Activated CD4-positive, alpha-beta memory T cell treated with anti-CD3 and anti-CD28 coated beads, Interleukin-2, amount 10 ng/mL, durations not matched to agents 7 days and 5 days (primary cell): ENCODE measurements at regions of chr3 and their contacts with region 1.

Region 1: DNA sequence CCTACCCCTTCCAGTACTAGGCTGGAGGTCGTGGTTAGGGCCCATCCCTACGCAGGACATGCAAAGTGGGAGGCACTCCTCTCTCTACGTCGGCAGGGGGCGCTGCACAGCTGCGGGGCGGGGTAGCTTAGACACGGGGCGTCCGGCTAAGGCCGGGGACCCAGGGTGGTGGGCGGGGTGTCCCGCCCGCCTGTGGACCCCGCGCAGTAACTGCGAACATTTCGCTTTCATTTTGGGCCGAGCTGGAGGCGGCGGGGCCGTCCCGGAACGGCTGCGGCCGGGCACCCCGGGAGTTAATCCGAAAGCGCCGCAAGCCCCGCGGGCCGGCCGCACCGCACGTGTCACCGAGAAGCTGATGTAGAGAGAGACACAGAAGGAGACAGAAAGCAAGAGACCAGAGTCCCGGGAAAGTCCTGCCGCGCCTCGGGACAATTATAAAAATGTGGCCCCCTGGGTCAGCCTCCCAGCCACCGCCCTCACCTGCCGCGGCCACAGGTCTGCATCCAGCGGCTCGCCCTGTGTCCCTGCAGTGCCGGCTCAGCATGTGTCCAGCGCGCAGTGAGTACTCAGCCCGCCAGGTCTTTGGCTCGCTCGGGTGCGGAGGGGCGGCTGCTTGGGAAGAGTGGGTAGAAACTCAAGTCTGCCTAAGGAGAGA is at the start of gene IL12A:
- DNase-seq: peak; percentile 85
- H3K4me3 Mint-ChIP-seq: peak within 1 kb of the TSS; percentile 76
- H3K27ac Mint-ChIP-seq: no peak within 1 kb of the TSS
- H3K4me1 Mint-ChIP-seq: peaks cover 17% of the 10 kb centered on the region
- H3K27me3 Mint-ChIP-seq: peaks cover 15% of the 10 kb centered on the region
- total RNA-seq, gene IL12A: 0.55 to 1.4 TPM

Region 2: DNA sequence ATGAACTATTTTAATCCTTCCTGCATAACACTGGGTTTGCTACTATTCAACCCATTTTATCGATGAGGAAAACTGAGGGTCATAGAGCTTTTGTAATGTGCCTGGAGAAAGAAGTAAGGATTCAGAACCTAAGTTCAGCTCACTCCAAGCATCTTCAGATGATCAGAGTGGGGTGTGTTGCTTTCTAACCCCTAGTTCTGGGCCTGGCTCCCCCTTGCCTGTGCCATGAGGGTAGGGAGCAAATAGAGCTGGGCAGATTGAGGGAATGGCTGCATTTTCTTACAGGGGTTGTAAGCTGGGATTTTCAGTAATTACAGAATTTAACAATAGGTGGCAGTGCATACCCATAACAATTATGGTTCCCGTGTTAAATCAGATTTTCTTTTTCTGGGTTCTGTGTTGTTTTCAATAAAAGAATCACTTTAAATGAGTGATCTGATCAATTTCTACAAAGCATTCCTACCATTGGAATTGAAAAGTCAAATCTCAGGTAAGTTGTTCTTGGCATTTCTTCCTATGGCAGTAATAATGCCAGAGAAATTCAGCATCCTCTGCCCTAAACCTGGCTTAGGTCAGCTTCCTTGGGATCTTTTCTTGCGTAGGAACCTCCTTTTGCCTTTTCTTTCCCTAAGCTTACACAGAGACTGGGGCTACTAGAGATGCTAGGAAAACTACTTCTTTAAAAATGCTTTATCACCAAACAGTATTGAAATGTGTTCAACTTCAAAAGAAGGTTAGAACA is 103.9 kb before region 1 on chr3:
- CTCF ChIA-PET with region 1: interaction called, 41 read pairs
- POLR2A ChIA-PET with region 1: no interaction called
- DNase-seq: no peak
- H3K4me3 Mint-ChIP-seq: no peak overlapping the region
- H3K27ac Mint-ChIP-seq: no peak overlapping the region
- H3K4me1 Mint-ChIP-seq: no peaks in the 10 kb centered on the region
- H3K27me3 Mint-ChIP-seq: peaks cover 27% of the 10 kb centered on the region

Region 3: DNA sequence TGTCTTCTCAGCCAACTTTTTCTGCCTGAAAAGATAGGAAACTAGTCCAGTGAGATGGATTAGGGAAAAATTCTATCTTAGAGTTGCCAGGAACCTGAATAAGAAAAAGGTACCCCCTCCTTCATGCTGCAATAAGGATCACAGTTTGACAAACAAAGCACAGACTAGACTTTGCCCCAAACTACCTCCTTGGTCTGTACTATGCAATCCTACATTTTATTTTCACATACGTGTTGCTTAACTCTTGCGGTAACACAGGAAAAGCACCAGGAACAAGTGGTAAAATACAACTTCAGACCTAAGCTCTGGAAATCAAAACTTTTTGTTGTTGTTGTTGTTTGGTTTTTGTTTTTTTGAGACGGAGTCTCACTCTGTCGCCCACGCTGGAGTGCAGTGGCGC is 11.4 kb before region 1 on chr3:
- CTCF ChIA-PET with region 1: interaction called, 10 read pairs
- POLR2A ChIA-PET with region 1: no interaction called
- DNase-seq: no peak
- H3K4me3 Mint-ChIP-seq: no peak overlapping the region
- H3K27ac Mint-ChIP-seq: no peak overlapping the region
- H3K4me1 Mint-ChIP-seq: no peaks in the 10 kb centered on the region
- H3K27me3 Mint-ChIP-seq: peaks cover 44% of the 10 kb centered on the region

Region 4: GRCh38 chr3:160003520-160004128 is 14.9 kb after region 1 on chr3:
- CTCF ChIA-PET with region 1: interaction called, 148 read pairs
- POLR2A ChIA-PET with region 1: interaction called, 3 read pairs
- DNase-seq: peak; percentile 53
- H3K4me3 Mint-ChIP-seq: no peak overlapping the region
- H3K27ac Mint-ChIP-seq: no peak overlapping the region
- H3K4me1 Mint-ChIP-seq: peaks cover 13% of the 10 kb centered on the region
- H3K27me3 Mint-ChIP-seq: no peaks in the 10 kb centered on the region

Region 5: GRCh38 chr3:160012108-160012507 is 23.4 kb after region 1 on chr3:
- CTCF ChIA-PET with region 1: interaction called, 148 read pairs
- POLR2A ChIA-PET with region 1: interaction called, 3 read pairs
- DNase-seq: no peak
- H3K4me3 Mint-ChIP-seq: no peak overlapping the region
- H3K27ac Mint-ChIP-seq: peak overlapping the region; percentile 64
- H3K4me1 Mint-ChIP-seq: peaks cover 53% of the 10 kb centered on the region
- H3K27me3 Mint-ChIP-seq: no peaks in the 10 kb centered on the region

Region 6: DNA sequence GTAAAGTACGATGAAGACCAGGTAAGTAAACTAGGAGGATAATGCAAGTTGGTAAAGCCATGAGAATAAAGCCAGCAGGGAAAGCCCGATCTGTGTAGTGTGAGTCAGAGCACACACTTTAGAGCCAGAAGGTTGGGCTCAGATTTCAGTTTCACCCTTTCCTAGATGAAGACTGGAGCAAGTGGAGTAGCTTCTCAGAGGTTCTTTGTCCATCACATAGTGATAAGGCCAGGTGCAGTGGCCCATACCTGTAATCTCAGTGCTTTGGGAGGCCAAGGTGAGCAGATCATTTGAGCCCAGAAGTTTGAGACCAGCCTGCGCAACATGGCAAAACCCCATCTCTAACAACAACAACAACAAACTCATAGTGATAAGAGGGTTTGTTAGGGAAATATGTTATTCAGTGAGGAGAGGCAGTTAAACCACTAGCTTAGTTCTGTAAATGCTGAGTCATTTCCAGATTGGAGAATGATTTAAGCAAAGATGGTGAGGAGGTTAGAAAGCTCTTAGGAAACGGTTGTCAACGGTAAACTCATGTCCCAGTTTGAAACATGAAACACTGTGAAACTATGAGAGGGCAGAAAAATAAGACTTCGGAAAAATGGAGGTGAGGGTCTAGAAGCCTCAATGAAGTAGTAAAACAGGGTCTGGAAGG is 38.9 kb after region 1 on chr3:
- CTCF ChIA-PET with region 1: interaction called, 30 read pairs
- POLR2A ChIA-PET with region 1: no interaction called
- DNase-seq: peak; percentile 38
- H3K4me3 Mint-ChIP-seq: peak overlapping the region; percentile 19
- H3K27ac Mint-ChIP-seq: peak overlapping the region; percentile 89
- H3K4me1 Mint-ChIP-seq: peaks cover 38% of the 10 kb centered on the region
- H3K27me3 Mint-ChIP-seq: no peaks in the 10 kb centered on the region